CD8-positive, alpha-beta T cell (primary cell): ENCODE measurements at regions of chr17 and their contacts with region 1.

Region 1: DNA sequence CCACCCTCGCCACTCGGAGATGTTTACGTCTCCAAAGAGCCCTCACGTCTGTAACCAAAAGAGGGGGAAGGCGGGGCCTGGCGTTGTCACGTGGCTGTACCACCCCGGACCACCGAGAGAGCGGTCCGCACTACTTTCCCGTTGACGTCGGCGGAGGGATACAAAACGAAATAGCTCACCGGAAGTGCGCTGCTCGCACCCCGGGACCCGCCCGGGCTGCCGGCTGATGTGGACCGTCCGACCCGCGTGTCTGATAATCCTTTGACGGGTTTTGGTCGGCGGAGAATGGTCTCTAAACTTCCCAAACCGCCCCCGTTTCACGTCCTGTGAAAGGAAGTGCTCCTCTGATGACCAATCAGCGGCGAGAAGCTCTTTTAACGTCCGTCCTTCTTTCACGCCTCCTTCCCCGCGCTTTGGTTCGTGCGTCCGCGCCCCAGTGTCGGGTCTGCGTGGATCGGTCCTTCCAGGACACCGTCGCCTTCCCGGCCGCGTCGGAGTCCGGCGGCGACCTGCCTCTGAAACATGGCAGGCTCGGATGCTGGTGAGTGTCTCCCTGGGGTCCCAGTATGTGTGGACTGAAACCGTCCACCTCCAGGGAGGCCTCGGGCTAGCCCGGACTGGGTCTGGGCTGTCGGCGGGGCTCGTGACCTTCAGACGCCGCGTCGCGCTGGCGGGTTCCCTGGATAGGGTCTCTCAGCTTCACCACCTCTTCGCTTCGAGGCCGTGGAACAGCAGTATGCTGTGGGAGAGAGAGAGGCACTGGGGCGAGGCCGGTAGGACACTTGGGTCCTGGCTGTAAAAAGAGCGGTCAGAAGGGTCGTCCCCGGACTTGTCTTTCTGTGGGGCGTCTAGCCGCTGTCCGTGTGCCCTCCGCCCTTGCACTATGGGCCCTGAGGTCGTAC is at the start of gene CEP95:
- DNase-seq: peak; percentile 90 to 99 (median 96)
- ATAC-seq: peak; percentile 64
- H3K4me3 ChIP-seq: peak within 1 kb of the TSS; percentile 99 to 100
- H3K4me3 Mint-ChIP-seq: peak within 1 kb of the TSS; percentile 100
- H3K27ac ChIP-seq: peak within 1 kb of the TSS; percentile 100
- H3K27ac Mint-ChIP-seq: peak within 1 kb of the TSS; percentile 100
- H3K4me1 ChIP-seq: peaks cover 44% of the 10 kb centered on the region
- H3K4me1 Mint-ChIP-seq: peaks cover 62% of the 10 kb centered on the region
- H3K27me3 ChIP-seq: no peaks in the 10 kb centered on the region
- H3K27me3 Mint-ChIP-seq: no peaks in the 10 kb centered on the region
- CTCF ChIP-seq: no peak
- total RNA-seq, gene CEP95: 248 to 282 TPM

Region 2: GRCh38 chr17:63842540-63843386 is 664.1 kb before region 1 on chr17 and contains the start of gene SMARCD2:
- CTCF ChIA-PET with region 1: no interaction called
- POLR2A ChIA-PET with region 1: interaction called, 4 read pairs
- intact Hi-C with region 1: loop called in 1 of 2 experiments (anchors 2 kb)
- DNase-seq: peak; percentile 99
- ATAC-seq: peak; percentile 91
- H3K4me3 ChIP-seq: peak within 1 kb of the TSS; percentile 86 to 95
- H3K4me3 Mint-ChIP-seq: peak within 1 kb of the TSS; percentile 92
- H3K27ac ChIP-seq: peak within 1 kb of the TSS; percentile 88 to 95
- H3K27ac Mint-ChIP-seq: peak within 1 kb of the TSS; percentile 92
- H3K4me1 ChIP-seq: peaks cover 43% of the 10 kb centered on the region
- H3K4me1 Mint-ChIP-seq: peaks cover 30% of the 10 kb centered on the region
- H3K27me3 ChIP-seq: no peaks in the 10 kb centered on the region
- H3K27me3 Mint-ChIP-seq: no peaks in the 10 kb centered on the region
- CTCF ChIP-seq: no peak
- total RNA-seq, gene SMARCD2: 121 TPM

Region 3: DNA sequence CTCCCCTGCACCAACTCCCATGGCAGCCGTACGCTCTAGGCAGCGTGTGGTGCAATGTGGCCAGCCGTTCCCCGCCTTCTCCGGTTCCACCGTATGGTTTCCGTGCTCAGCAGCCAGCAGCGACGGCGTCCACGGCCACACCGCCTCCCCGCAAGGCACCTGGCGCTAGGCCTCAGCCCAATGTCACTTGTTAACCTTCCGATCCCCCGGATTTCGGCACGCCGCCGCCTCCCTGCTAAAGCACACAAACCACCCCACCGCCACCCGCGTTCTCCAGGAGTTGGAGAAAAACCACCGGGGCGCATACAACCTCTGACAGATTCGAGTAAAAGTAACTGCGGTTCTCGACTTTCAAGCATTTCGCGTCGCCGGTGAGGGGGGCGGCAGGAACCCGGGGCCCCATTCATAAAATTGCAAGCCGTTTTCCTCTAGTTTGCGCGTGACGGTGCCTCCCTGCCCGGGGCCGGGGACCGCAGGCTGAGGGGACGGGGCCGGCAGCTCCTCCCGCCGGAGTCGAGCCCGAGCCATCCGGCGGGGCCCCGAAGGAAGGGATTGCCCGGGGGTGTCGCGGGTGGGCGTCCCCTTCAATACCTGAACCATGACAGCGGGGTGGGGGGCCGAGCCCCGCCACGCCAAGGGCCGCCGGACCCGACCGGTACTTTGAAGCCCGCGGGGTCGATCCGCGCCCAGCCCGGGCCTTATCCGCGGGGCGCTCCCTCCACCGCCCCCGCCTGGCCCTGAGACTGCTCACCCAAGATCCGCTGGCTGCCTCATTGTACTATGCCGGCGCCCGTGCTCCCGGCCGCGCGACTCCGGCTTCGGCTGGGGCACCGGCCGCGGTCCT is 244.2 kb before region 1 on chr17 and contains the start of gene TEX2:
- CTCF ChIA-PET with region 1: no interaction called
- POLR2A ChIA-PET with region 1: interaction called, 4 read pairs
- intact Hi-C with region 1: loop called in 1 of 2 experiments (anchors 5 kb)
- DNase-seq: peak; percentile 39 to 87 (median 67)
- ATAC-seq: peak; percentile 32
- H3K4me3 ChIP-seq: peak within 1 kb of the TSS; percentile 64 to 82
- H3K4me3 Mint-ChIP-seq: peak within 1 kb of the TSS; percentile 89
- H3K27ac ChIP-seq: peak within 1 kb of the TSS; percentile 67 to 74
- H3K27ac Mint-ChIP-seq: peak within 1 kb of the TSS; percentile 93
- H3K4me1 ChIP-seq: peaks cover 21% of the 10 kb centered on the region
- H3K4me1 Mint-ChIP-seq: peaks cover 37% of the 10 kb centered on the region
- H3K27me3 ChIP-seq: no peaks in the 10 kb centered on the region
- H3K27me3 Mint-ChIP-seq: no peaks in the 10 kb centered on the region
- CTCF ChIP-seq: no peak
- total RNA-seq, gene TEX2: 4.8 to 5.6 TPM

Region 4: GRCh38 chr17:64479650-64480049 is 27.2 kb before region 1 on chr17:
- CTCF ChIA-PET with region 1: interaction called, 3 read pairs
- POLR2A ChIA-PET with region 1: interaction called, 16 read pairs
- intact Hi-C with region 1: no loop called
- DNase-seq: no peak
- ATAC-seq: no peak
- H3K4me3 ChIP-seq: no peak overlapping the region
- H3K4me3 Mint-ChIP-seq: no peak overlapping the region
- H3K27ac ChIP-seq: no peak overlapping the region
- H3K27ac Mint-ChIP-seq: peak overlapping the region; percentile 52
- H3K4me1 ChIP-seq: peaks cover 4% of the 10 kb centered on the region
- H3K4me1 Mint-ChIP-seq: peaks cover 7% of the 10 kb centered on the region
- H3K27me3 ChIP-seq: no peaks in the 10 kb centered on the region
- H3K27me3 Mint-ChIP-seq: no peaks in the 10 kb centered on the region
- CTCF ChIP-seq: no peak

Region 5: GRCh38 chr17:64565563-64565962 is 58.7 kb after region 1 on chr17:
- CTCF ChIA-PET with region 1: no interaction called
- POLR2A ChIA-PET with region 1: no interaction called
- intact Hi-C with region 1: no loop called
- DNase-seq: no peak
- ATAC-seq: no peak
- H3K4me3 ChIP-seq: no peak overlapping the region
- H3K4me3 Mint-ChIP-seq: no peak overlapping the region
- H3K27ac ChIP-seq: no peak overlapping the region
- H3K27ac Mint-ChIP-seq: no peak overlapping the region
- H3K4me1 ChIP-seq: no peaks in the 10 kb centered on the region
- H3K4me1 Mint-ChIP-seq: no peaks in the 10 kb centered on the region
- H3K27me3 ChIP-seq: no peaks in the 10 kb centered on the region
- H3K27me3 Mint-ChIP-seq: no peaks in the 10 kb centered on the region
- CTCF ChIP-seq: no peak

Region 6: GRCh38 chr17:64661976-64662773 is 155.3 kb after region 1 on chr17 and contains the start of gene SMURF2:
- CTCF ChIA-PET with region 1: no interaction called
- POLR2A ChIA-PET with region 1: interaction called, 17 read pairs
- intact Hi-C with region 1: loop called (anchors 1 to 2 kb)
- DNase-seq: peak; percentile 63 to 90 (median 80)
- ATAC-seq: peak; percentile 90
- H3K4me3 ChIP-seq: peak within 1 kb of the TSS; percentile 71 to 79
- H3K4me3 Mint-ChIP-seq: peak within 1 kb of the TSS; percentile 98
- H3K27ac ChIP-seq: peak within 1 kb of the TSS; percentile 56 to 63
- H3K27ac Mint-ChIP-seq: peak within 1 kb of the TSS; percentile 95
- H3K4me1 ChIP-seq: peaks cover 31% of the 10 kb centered on the region
- H3K4me1 Mint-ChIP-seq: peaks cover 44% of the 10 kb centered on the region
- H3K27me3 ChIP-seq: no peaks in the 10 kb centered on the region
- H3K27me3 Mint-ChIP-seq: no peaks in the 10 kb centered on the region
- CTCF ChIP-seq: no peak
- total RNA-seq, gene SMURF2: 27.3 to 28.1 TPM

Region 7: GRCh38 chr17:64750891-64751677 is 244.3 kb after region 1 on chr17:
- CTCF ChIA-PET with region 1: no interaction called
- POLR2A ChIA-PET with region 1: no interaction called
- intact Hi-C with region 1: no loop called
- DNase-seq: peak in 1 of 9 experiments; percentile 17
- ATAC-seq: no peak
- H3K4me3 ChIP-seq: no peak overlapping the region
- H3K4me3 Mint-ChIP-seq: no peak overlapping the region
- H3K27ac ChIP-seq: no peak overlapping the region
- H3K27ac Mint-ChIP-seq: no peak overlapping the region
- H3K4me1 ChIP-seq: no peaks in the 10 kb centered on the region
- H3K4me1 Mint-ChIP-seq: no peaks in the 10 kb centered on the region
- H3K27me3 ChIP-seq: no peaks in the 10 kb centered on the region
- H3K27me3 Mint-ChIP-seq: no peaks in the 10 kb centered on the region
- CTCF ChIP-seq: no peak

Region 8: GRCh38 chr17:65888649-65889048 is 1381.8 kb after region 1 on chr17:
- CTCF ChIA-PET with region 1: no interaction called
- POLR2A ChIA-PET with region 1: no interaction called
- intact Hi-C with region 1: no loop called
- DNase-seq: no peak
- ATAC-seq: no peak
- H3K4me3 ChIP-seq: no peak overlapping the region
- H3K4me3 Mint-ChIP-seq: no peak overlapping the region
- H3K27ac ChIP-seq: no peak overlapping the region
- H3K27ac Mint-ChIP-seq: no peak overlapping the region
- H3K4me1 ChIP-seq: no peaks in the 10 kb centered on the region
- H3K4me1 Mint-ChIP-seq: no peaks in the 10 kb centered on the region
- H3K27me3 ChIP-seq: no peaks in the 10 kb centered on the region
- H3K27me3 Mint-ChIP-seq: no peaks in the 10 kb centered on the region
- CTCF ChIP-seq: no peak